ENCODE measurements at regions of chr3 and their contacts with region 1.

Region 1: GRCh38 chr3:187139126-187139894 is at the start of gene RPL39L:
- DNase-seq: peak; percentile 96
- H3K4me3 Mint-ChIP-seq: peak within 1 kb of the TSS; percentile 91
- H3K27ac Mint-ChIP-seq: peak within 1 kb of the TSS; percentile 93
- H3K4me1 Mint-ChIP-seq: peaks cover 22% of the 10 kb centered on the region
- H3K27me3 Mint-ChIP-seq: no peaks in the 10 kb centered on the region
- total RNA-seq, gene RPL39L: 22.5 to 25.2 TPM

Region 2: GRCh38 chr3:187101184-187102072 is 37.9 kb before region 1 on chr3:
- CTCF ChIA-PET with region 1: interaction called, 17 read pairs
- POLR2A ChIA-PET with region 1: no interaction called
- intact Hi-C with region 1: no loop called
- DNase-seq: peak; percentile 68
- H3K4me3 Mint-ChIP-seq: peak overlapping the region; percentile 20
- H3K27ac Mint-ChIP-seq: peak overlapping the region; percentile 28
- H3K4me1 Mint-ChIP-seq: peaks cover 30% of the 10 kb centered on the region
- H3K27me3 Mint-ChIP-seq: no peaks in the 10 kb centered on the region

Region 3: GRCh38 chr3:187125319-187126031 is 13.8 kb before region 1 on chr3:
- CTCF ChIA-PET with region 1: interaction called, 58 read pairs
- POLR2A ChIA-PET with region 1: interaction called, 5 read pairs
- intact Hi-C with region 1: loop called (anchors 1 kb)
- DNase-seq: no peak
- H3K4me3 Mint-ChIP-seq: no peak overlapping the region
- H3K27ac Mint-ChIP-seq: no peak overlapping the region
- H3K4me1 Mint-ChIP-seq: peaks cover 17% of the 10 kb centered on the region
- H3K27me3 Mint-ChIP-seq: no peaks in the 10 kb centered on the region